HEK293 (cell line): ENCODE measurements at regions of chr4 and their contacts with region 1.

Region 1: GRCh38 chr4:173334085-173334772 is at the start of gene HMGB2:
- H3K4me3 ChIP-seq: peak within 1 kb of the TSS; percentile 99
- H3K27ac ChIP-seq: peak within 1 kb of the TSS; percentile 99
- H3K4me1 ChIP-seq: peaks cover 12% of the 10 kb centered on the region
- CTCF ChIP-seq: no peak

Region 2: GRCh38 chr4:173169428-173170181 is 164.6 kb before region 1 on chr4:
- CTCF ChIA-PET with region 1: no interaction called
- POLR2A ChIA-PET with region 1: interaction called, 12 read pairs
- H3K4me3 ChIP-seq: peak overlapping the region; percentile 88
- H3K27ac ChIP-seq: peak overlapping the region; percentile 88
- H3K4me1 ChIP-seq: peaks cover 17% of the 10 kb centered on the region
- CTCF ChIP-seq: no peak

Region 3: GRCh38 chr4:173318648-173319211 is 15.5 kb before region 1 on chr4:
- CTCF ChIA-PET with region 1: interaction called, 3 read pairs
- POLR2A ChIA-PET with region 1: interaction called, 13 read pairs
- H3K4me3 ChIP-seq: no peak overlapping the region
- H3K27ac ChIP-seq: no peak overlapping the region
- H3K4me1 ChIP-seq: no peaks in the 10 kb centered on the region
- CTCF ChIP-seq: no peak

Region 4: DNA sequence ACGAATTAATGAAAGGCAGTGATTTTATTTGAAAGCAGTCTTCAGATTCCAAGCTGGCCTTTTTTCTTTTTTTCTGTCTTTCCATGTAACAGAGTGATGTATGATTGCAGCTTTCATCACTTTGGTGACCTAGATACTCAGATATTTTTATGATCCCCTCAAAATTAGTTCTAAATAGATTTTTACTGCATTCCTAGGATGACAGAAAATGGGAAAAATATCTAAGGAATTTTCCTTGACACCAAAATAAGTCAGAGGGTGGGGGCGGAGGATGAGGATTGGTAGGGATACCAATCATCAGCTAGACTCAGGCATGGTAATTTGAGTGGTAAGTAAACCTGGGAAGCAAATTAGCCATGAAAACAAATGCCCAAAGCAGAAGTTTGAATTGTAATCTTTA is 11.8 kb after region 1 on chr4:
- CTCF ChIA-PET with region 1: interaction called, 4 read pairs
- POLR2A ChIA-PET with region 1: interaction called, 31 read pairs
- H3K4me3 ChIP-seq: no peak overlapping the region
- H3K27ac ChIP-seq: no peak overlapping the region
- H3K4me1 ChIP-seq: no peaks in the 10 kb centered on the region
- CTCF ChIP-seq: no peak

Region 5: GRCh38 chr4:173360587-173361221 is 26.5 kb after region 1 on chr4:
- CTCF ChIA-PET with region 1: no interaction called
- POLR2A ChIA-PET with region 1: interaction called, 14 read pairs
- H3K4me3 ChIP-seq: no peak overlapping the region
- H3K27ac ChIP-seq: no peak overlapping the region
- H3K4me1 ChIP-seq: no peaks in the 10 kb centered on the region
- CTCF ChIP-seq: no peak

Region 6: GRCh38 chr4:173370477-173371291 is 36.5 kb after region 1 on chr4 and contains the start of gene SAP30:
- CTCF ChIA-PET with region 1: interaction called, 3 read pairs
- POLR2A ChIA-PET with region 1: interaction called, 246 read pairs
- H3K4me3 ChIP-seq: peak within 1 kb of the TSS; percentile 85
- H3K27ac ChIP-seq: peak within 1 kb of the TSS; percentile 92
- H3K4me1 ChIP-seq: no peaks in the 10 kb centered on the region
- CTCF ChIP-seq: no peak